ENCODE measurements at regions of chr3 and their contacts with region 1.

Region 1: DNA sequence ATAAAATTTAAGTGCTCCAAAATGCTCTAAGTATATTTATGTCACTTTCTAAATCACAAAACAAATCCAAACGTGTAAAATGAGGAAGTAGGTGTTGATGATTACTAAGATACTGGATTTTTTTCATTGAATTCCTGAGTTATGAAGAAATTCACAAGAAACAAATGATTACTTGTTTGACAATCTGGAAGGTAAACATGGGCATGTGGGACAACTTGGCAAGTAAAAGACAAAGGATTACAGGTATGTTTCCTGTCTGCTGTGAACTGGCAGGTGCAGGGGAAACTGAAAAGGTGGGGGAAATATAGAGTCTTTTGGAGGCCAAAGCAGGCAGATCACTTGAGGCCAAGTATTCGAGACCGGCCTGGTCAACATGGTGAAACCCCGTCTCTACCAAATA is 252.7 kb upstream of the AZI2 start:
- DNase-seq: no peak
- H3K4me3 ChIP-seq: no peak overlapping the region
- H3K27ac ChIP-seq: no peak overlapping the region
- H3K4me1 ChIP-seq: no peaks in the 10 kb centered on the region
- H3K27me3 ChIP-seq: no peaks in the 10 kb centered on the region
- CTCF ChIP-seq: no peak
- POLR2A ChIP-seq: no peak

Region 2: GRCh38 chr3:28623106-28623505 is 21.8 kb after region 1 on chr3:
- intact Hi-C with region 1: loop called (anchors 2 kb)
- DNase-seq: no peak
- H3K4me3 ChIP-seq: no peak overlapping the region
- H3K27ac ChIP-seq: no peak overlapping the region
- H3K4me1 ChIP-seq: no peaks in the 10 kb centered on the region
- H3K27me3 ChIP-seq: no peaks in the 10 kb centered on the region
- CTCF ChIP-seq: no peak
- POLR2A ChIP-seq: no peak